Activated CD4-positive, alpha-beta memory T cell treated with anti-CD3 and anti-CD28 coated beads for 36 hours (primary cell): ENCODE measurements at regions of chr11 and their contacts with region 1.

Region 1: GRCh38 chr11:2532704-2533586 is 88.1 kb downstream of the KCNQ1 start:
- DNase-seq: peak; percentile 94
- H3K4me3 Mint-ChIP-seq: peak overlapping the region; percentile 54
- H3K27ac Mint-ChIP-seq: no peak overlapping the region
- H3K4me1 Mint-ChIP-seq: peaks cover 10% of the 10 kb centered on the region
- H3K27me3 Mint-ChIP-seq: no peaks in the 10 kb centered on the region

Region 2: DNA sequence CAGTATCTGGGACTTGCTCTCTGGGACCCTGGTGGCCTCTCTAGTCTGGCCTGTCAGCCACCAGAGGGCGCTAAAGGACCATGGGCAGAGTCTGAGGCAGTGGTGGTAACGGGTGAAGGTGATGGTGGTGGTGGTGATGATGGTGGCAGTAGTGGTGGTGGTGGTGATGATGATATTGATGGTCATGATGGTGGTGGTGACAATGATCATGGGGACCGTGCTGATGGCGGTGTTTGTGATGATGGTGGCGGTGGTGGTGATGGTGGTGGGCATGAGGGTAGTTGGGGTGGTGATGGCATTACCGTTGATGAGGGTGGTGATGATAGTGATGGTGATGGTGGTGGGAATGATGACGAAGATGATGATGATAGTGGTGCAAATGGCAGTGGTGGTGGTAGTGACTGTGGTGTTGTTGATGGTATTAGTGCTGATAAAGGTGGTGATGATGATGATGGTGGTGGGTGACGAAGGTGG is 104.6 kb before region 1 on chr11:
- CTCF ChIA-PET with region 1: interaction called, 121 read pairs
- POLR2A ChIA-PET with region 1: interaction called, 3 read pairs
- intact Hi-C with region 1: loop called (anchors 1 kb)
- DNase-seq: peak; percentile 87
- H3K4me3 Mint-ChIP-seq: no peak overlapping the region
- H3K27ac Mint-ChIP-seq: no peak overlapping the region
- H3K4me1 Mint-ChIP-seq: no peaks in the 10 kb centered on the region
- H3K27me3 Mint-ChIP-seq: no peaks in the 10 kb centered on the region

Region 3: DNA sequence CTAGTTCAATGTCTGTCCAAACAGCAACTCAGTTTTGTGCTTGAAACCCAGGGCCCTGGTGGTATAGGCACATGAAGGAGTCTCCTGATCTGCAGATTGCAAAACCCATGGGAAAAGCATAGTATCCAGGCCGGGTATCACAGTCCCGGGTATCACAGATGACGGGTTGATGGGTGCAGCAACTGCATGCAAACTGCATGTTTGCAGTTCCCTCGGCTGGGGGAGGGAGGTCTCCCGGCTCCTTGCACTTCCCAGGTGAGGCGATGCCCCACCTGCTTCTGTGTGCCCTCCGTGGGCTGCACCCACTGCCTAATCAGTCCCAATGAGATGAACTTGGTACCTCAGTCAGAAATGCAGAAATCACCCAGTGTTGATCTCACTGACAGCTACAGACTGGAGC is 34.2 kb before region 1 on chr11:
- CTCF ChIA-PET with region 1: no interaction called
- POLR2A ChIA-PET with region 1: no interaction called
- intact Hi-C with region 1: no loop called
- DNase-seq: no peak
- H3K4me3 Mint-ChIP-seq: no peak overlapping the region
- H3K27ac Mint-ChIP-seq: no peak overlapping the region
- H3K4me1 Mint-ChIP-seq: no peaks in the 10 kb centered on the region
- H3K27me3 Mint-ChIP-seq: no peaks in the 10 kb centered on the region

Region 4: GRCh38 chr11:2612884-2613571 is 80.1 kb after region 1 on chr11:
- CTCF ChIA-PET with region 1: no interaction called
- POLR2A ChIA-PET with region 1: no interaction called
- intact Hi-C with region 1: no loop called
- DNase-seq: no peak
- H3K4me3 Mint-ChIP-seq: no peak overlapping the region
- H3K27ac Mint-ChIP-seq: no peak overlapping the region
- H3K4me1 Mint-ChIP-seq: no peaks in the 10 kb centered on the region
- H3K27me3 Mint-ChIP-seq: no peaks in the 10 kb centered on the region

Region 5: DNA sequence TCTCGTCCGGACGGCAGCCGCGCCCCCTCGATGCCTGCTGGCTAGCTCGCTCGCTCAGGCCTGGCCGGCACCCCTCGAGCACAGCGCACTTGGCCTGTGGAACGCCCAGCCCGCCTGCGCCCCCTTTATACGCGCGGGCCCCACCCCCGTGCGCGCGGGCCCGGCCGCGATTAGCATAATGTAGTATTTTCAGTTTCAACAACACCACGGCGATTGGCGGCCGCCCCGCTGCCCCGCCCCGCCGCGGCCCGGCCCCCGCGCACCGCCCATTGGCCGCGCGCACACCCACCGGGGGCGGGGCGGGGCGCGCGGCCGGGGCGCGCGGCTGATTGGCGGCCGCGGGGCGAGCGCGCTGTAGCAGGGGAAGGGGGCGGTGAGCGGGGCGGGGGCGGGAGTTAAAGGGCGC is 352.7 kb after region 1 on chr11 and contains the start of gene CDKN1C:
- CTCF ChIA-PET with region 1: interaction called, 532 read pairs
- POLR2A ChIA-PET with region 1: interaction called, 6 read pairs
- intact Hi-C with region 1: loop called (anchors 1 kb)
- DNase-seq: peak; percentile 82
- H3K4me3 Mint-ChIP-seq: peak within 1 kb of the TSS; percentile 80
- H3K27ac Mint-ChIP-seq: peak within 1 kb of the TSS; percentile 24
- H3K4me1 Mint-ChIP-seq: peaks cover 3% of the 10 kb centered on the region
- H3K27me3 Mint-ChIP-seq: peaks cover 2% of the 10 kb centered on the region
- total RNA-seq, gene CDKN1C: 0.41 to 0.69 TPM

Region 6: DNA sequence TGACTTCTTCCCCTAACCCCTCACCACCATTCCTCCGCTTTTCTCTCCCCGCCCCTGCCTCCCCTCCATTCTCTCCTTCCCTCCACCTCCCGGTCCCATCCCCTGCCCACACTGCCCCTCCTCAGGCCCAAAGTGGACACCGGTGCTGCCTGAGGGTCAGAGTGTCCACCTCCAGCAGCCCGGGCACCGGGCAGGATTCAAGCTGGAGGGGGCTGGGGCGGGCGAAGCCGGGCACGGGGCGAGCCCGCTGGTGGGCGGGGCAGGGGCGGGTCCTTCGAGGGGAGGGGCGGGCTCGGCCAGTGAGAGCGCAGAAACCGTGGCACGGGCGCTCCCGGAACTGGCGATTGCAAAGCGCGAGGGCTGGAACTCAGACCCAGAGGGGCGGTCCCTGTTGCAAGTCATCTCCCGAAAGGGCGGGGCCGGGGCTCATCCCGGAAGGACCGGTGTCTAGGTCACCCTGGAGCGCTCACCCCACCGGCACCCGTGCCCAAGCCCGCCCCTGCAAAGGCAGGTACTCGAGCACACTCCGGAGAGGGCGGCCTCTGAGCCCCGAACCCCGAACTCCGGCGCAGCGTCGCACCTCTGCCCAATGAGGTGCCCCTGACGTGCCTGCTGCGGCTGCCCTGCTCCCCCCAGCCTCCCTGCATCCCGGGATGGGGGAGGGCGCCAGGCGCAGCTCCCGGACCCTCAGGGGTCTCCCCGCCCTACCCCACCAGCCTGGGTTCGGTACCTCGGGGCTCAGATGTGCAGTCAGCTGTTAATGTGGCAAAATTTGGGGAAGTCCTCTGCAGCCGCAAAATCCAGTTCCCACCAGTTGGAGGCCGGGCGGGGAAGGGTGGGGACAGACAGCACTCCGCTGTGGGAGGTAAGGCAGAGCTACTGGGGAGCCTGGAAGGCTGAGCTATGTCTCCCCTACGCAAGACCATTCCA is 369.2 kb after region 1 on chr11:
- CTCF ChIA-PET with region 1: interaction called, 18 read pairs
- POLR2A ChIA-PET with region 1: no interaction called
- intact Hi-C with region 1: no loop called
- DNase-seq: peak; percentile 98
- H3K4me3 Mint-ChIP-seq: peak overlapping the region; percentile 71
- H3K27ac Mint-ChIP-seq: peak overlapping the region; percentile 62
- H3K4me1 Mint-ChIP-seq: peaks cover 32% of the 10 kb centered on the region
- H3K27me3 Mint-ChIP-seq: no peaks in the 10 kb centered on the region